ENCODE measurements at regions of chr14 and their contacts with region 1.

Region 1: DNA sequence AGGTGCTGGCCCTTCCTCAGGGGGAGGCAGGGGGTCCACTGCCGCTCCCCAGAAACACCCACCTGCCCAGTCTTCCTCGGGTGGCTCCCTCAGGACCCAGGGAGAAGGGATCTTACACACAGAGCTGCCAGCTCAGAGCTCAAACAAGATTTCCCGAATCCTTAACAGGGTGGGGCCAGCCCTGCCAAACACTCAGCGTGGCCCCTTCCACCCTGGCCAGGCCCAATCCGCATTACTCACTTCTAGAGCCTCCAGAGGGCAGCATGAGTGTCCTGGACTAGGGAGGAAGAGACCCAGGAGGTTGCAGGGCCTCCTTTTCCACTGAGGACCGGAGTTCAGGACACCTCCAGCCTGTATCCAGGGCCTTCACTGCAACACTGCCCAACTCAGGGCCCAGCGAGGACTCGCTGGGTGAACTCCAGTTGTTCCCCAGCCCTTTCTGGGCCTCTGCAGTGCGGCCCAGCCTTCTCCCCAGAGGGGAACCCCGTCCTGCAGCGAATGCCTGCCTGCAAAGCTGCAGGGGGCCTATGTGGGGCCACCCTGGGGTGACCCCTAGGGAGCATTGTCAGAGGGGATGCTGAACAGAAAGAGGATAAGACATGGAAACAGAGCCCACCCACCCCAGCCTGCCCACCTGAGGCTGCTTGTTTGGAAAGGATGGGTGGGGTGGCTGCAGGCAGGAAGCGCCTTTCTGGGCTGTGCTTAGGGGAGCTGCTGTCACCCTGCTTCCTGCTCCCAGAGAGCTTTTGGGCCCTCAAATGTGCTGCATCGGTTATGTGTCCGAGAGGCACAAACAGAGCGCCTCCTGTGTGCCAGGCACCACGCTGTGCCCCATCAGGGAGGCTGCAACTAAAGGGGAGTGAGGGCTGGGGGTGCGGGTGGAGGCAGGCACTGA is 43.8 kb downstream of the CCNK start:
- DNase-seq: peak; percentile 26
- ATAC-seq: peak; percentile 44

Region 2: GRCh38 chr14:99609245-99610117 is 84.4 kb after region 1 on chr14:
- intact Hi-C with region 1: loop called (anchors 5 kb)
- DNase-seq: peak; percentile 49
- ATAC-seq: no peak

Region 3: DNA sequence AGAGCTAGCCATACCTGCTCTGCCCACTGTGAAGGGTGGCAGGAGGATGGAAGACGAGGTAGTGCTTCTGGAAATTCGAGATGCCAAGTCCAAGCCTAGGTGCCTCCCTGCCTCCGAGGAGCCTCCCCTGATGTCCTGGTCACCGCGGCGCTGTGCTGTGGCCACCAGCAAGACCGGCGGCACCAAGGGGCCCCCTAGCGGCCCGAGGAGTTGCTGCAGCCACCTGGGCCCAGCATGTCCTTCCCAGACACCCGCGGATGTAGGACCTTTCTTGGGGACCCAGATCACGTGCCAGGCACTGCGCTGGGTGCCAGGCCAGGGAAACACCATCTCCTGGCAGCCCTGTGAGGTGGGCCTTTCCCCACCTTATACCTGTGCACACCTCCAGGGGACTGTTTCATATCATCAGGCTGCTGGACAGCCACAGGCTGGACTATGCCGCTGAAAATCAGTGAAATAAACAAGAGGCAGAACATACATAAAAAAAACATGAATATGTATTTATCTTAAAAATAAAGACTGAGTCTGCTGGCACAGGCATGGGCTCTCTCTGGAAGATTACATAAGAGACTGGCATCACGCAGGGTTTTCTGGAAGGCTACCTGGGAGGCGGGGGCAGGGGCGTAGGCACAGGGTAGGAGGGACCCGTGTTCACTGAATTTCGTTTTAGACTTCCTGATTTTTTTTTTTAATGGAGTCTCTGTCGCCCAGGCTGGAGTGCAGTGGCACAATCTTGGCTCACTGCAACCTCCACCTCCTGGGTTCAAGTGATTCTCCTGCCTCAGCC is 104.0 kb after region 1 on chr14:
- intact Hi-C with region 1: loop called (anchors 5 kb)
- DNase-seq: peak; percentile 88
- ATAC-seq: peak; percentile 92

Region 4: DNA sequence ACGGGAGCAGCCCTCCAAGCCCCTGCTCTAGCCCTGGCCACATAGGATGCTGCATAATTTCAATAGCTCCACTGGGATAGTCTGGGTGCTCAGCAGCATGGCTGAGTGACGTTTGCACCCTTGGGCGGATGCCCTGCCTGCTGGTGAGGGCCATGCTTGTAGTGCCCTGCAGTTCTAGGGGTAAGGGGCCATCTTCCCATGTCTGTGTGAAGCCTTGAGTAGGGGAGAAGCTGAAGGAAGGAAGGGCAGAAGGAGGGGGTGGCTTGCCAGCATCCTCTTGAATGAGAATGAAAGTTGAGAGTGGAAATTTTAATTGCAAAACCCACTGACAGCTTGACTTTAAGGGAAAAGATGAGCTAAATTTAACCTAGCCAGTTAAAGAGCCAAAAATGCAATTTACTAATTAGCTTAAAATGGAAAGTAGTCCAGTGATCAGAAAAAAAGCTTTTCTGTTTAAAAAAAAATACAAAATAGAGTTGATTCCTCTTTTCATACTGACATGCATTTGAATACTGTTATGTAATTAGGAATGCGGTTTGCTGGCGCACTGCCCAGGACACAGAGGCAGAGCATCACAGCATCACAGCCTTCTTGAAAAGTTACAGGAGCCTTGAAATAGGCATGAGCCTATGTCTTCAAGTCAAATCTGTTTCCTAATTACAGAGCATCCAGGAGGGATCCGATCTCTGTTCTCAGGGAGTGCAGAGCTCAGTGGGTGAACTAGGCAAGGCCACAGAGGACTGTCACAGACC is 249.7 kb after region 1 on chr14:
- intact Hi-C with region 1: no loop called
- DNase-seq: peak; percentile 78
- ATAC-seq: peak; percentile 26